IMR-90 (cell line): ENCODE measurements at regions of chr1 and their contacts with region 1.

Region 1: GRCh38 chr1:86119214-86119764 is 37.3 kb downstream of the COL24A1 start:
- DNase-seq: peak; percentile 34
- ATAC-seq: no peak
- H3K4me3 ChIP-seq: no peak overlapping the region
- H3K27ac ChIP-seq: no peak overlapping the region
- H3K4me1 ChIP-seq: no peaks in the 10 kb centered on the region
- H3K27me3 ChIP-seq: no peaks in the 10 kb centered on the region
- CTCF ChIP-seq: no peak
- POLR2A ChIP-seq: no peak
- RAD21 ChIP-seq: no peak

Region 2: GRCh38 chr1:86082183-86082582 is 37.1 kb before region 1 on chr1:
- CTCF ChIA-PET with region 1: no interaction called
- POLR2A ChIA-PET with region 1: no interaction called
- dilution Hi-C with region 1: no loop called
- in situ Hi-C with region 1: no loop called
- intact Hi-C with region 1: loop called (anchors 5 kb)
- DNase-seq: no peak
- ATAC-seq: no peak
- H3K4me3 ChIP-seq: no peak overlapping the region
- H3K27ac ChIP-seq: no peak overlapping the region
- H3K4me1 ChIP-seq: peaks cover 3% of the 10 kb centered on the region
- H3K27me3 ChIP-seq: no peaks in the 10 kb centered on the region
- CTCF ChIP-seq: 0 out of 2 replicates have a peak, but pooled peaks have one; percentile 9
- POLR2A ChIP-seq: no peak
- RAD21 ChIP-seq: no peak